Panc1 (cell line): ENCODE measurements at regions of chr7 and their contacts with region 1.

Region 1: GRCh38 chr7:8536431-8536830 is 103.0 kb downstream of the NXPH1 start:
- DNase-seq: no peak
- ATAC-seq: no peak
- H3K4me3 ChIP-seq: no peak overlapping the region
- H3K27ac ChIP-seq: no peak overlapping the region
- H3K4me1 ChIP-seq: no peaks in the 10 kb centered on the region
- H3K27me3 ChIP-seq: no peaks in the 10 kb centered on the region
- CTCF ChIP-seq: no peak

Region 2: GRCh38 chr7:8564281-8564680 is 27.9 kb after region 1 on chr7:
- CTCF ChIA-PET with region 1: no interaction called
- POLR2A ChIA-PET with region 1: no interaction called
- in situ Hi-C with region 1: no loop called
- intact Hi-C with region 1: loop called (anchors 1 kb)
- DNase-seq: no peak
- ATAC-seq: no peak
- H3K4me3 ChIP-seq: no peak overlapping the region
- H3K27ac ChIP-seq: no peak overlapping the region
- H3K4me1 ChIP-seq: no peaks in the 10 kb centered on the region
- H3K27me3 ChIP-seq: no peaks in the 10 kb centered on the region
- CTCF ChIP-seq: no peak